A673 (cell line): ENCODE measurements at regions of chr19 and their contacts with region 1.

Region 1: DNA sequence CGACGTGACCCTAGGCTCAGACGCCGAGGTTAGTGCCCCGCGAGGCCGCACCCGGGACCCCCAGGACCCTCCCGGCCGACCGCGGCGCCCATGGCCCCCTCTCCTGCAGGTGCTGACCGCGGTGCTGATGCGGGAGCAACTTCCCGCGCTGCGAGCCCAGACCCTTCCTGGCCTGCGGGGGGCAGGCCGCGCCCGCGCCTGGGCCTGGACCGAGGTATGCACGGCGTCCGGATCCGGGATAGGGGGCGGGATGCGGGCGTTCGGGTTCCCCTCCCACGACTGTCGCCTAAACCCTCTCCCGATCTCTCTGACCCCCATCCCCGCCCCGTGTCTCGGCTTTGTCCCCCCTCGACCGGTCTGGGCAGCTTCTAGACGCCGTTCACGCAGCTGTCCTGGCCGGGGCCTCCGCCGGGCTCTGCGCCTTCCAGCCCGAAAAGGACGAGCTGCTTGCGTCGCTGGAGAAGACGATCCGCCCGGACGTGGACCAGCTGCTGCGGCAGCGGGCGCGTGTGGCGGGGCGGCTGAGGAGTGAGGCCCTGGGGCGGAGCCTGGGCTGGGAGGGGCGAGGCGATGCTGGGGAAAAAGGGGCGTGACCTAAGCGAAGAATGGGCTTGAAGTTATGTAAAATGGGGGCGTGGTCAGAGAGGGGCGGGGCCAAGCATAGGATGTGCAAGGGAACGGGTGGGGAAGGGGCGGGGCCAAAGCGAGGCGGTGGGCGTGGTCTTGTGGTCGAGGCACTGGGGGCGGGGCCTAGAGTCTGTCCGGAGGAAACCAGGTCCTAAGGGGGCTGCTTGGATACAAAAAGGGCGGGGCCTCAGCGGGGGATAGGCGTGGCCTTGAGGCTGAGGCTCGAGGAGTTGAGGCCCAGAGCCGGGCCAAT is 16.0 kb upstream of the COLGALT1 start:
- DNase-seq: peak; percentile 98
- H3K4me3 ChIP-seq: peak overlapping the region; percentile 53
- H3K27ac ChIP-seq: peak overlapping the region; percentile 56
- H3K4me1 ChIP-seq: no peaks in the 10 kb centered on the region
- H3K27me3 ChIP-seq: no peaks in the 10 kb centered on the region
- CTCF ChIP-seq: peak; percentile 39; the same call in 1 of the 2 replicates

Region 2: GRCh38 chr19:17226002-17226933 is 313.2 kb before region 1 on chr19 and contains the start of gene OCEL1:
- CTCF ChIA-PET with region 1: no interaction called
- POLR2A ChIA-PET with region 1: no interaction called
- intact Hi-C with region 1: no loop called
- DNase-seq: peak; percentile 98
- H3K4me3 ChIP-seq: peak within 1 kb of the TSS; percentile 59
- H3K27ac ChIP-seq: peak within 1 kb of the TSS; percentile 86
- H3K4me1 ChIP-seq: peaks cover 5% of the 10 kb centered on the region
- H3K27me3 ChIP-seq: no peaks in the 10 kb centered on the region
- CTCF ChIP-seq: no peak
- total RNA-seq, gene OCEL1: 8.2 and 14.8 TPM in 2 replicates

Region 3: GRCh38 chr19:17282488-17283255 is 256.8 kb before region 1 on chr19:
- CTCF ChIA-PET with region 1: no interaction called
- POLR2A ChIA-PET with region 1: no interaction called
- intact Hi-C with region 1: no loop called
- DNase-seq: peak; percentile 89
- H3K4me3 ChIP-seq: peak overlapping the region; percentile 55
- H3K27ac ChIP-seq: peak overlapping the region; percentile 29
- H3K4me1 ChIP-seq: peaks cover 4% of the 10 kb centered on the region
- H3K27me3 ChIP-seq: no peaks in the 10 kb centered on the region
- CTCF ChIP-seq: peak; percentile 93

Region 4: DNA sequence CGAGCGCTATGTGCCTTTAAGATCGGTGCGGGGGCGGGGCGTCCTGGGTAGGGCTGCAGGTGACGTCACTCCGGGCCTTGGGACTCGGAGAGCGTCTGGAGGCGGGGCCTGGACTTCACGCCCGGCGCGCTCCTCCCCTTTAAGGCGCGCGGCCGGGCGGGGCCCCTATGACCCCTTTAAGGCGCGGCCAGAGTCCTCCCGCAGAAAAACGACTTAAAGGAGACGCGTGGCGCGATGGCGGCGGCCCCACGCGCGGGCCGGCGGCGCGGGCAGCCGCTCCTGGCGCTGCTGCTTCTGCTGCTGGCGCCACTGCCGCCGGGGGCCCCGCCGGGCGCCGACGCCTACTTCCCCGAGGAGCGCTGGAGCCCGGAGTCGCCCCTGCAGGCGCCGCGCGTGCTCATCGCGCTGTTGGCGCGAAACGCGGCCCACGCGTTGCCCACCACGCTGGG is 16.0 kb after region 1 on chr19 and contains the start of gene COLGALT1:
- CTCF ChIA-PET with region 1: no interaction called
- POLR2A ChIA-PET with region 1: no interaction called
- intact Hi-C with region 1: no loop called
- DNase-seq: peak; percentile 99
- H3K4me3 ChIP-seq: peak within 1 kb of the TSS; percentile 69
- H3K27ac ChIP-seq: peak within 1 kb of the TSS; percentile 85
- H3K4me1 ChIP-seq: peaks cover 23% of the 10 kb centered on the region
- H3K27me3 ChIP-seq: no peaks in the 10 kb centered on the region
- CTCF ChIP-seq: no peak
- total RNA-seq, gene COLGALT1: 91.3 and 93.5 TPM in 2 replicates

Region 5: DNA sequence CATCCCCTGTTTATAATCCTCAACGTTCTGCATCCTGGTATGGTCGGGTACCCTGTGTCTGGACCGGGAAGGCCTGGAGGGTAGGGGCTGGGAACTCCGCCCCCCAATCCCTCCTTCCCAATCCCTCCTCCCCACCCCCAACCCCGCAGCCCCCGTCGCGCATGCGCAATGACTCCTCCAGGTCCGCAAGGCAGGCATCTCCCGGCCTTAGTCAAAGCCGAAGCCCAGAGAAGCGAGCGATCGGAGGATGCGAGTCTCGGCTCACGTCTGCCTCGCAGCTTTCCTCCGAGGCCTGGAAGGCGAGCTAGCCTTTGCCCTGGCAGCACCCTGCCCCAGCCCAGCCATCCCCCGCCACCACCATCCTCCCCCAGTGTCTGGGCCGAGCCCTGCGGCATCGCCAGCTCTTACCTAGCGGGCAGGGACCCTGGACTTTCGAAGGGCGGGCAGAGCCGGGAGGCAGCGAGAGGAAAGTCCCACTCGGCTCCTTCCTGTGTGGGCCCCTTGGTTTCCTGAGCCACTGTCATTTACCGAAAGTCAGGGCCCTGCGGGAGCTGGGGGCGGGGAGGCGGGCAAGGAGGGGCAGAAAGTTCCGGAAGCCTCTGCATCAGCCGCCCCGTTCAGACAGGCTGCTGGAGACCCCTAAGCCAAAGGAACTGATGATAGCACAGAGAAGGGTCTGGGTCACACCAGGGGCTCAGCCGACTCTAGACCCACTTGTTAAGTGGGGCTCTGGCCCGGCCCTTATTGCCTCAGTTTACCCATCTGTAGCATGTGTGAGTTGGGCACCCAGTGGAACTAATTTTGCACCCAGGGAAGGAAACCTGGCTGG is 308.3 kb after region 1 on chr19 and contains the start of gene JAK3:
- CTCF ChIA-PET with region 1: no interaction called
- POLR2A ChIA-PET with region 1: interaction called, 11 read pairs
- intact Hi-C with region 1: no loop called
- DNase-seq: peak; percentile 88
- H3K4me3 ChIP-seq: peak within 1 kb of the TSS; percentile 43
- H3K27ac ChIP-seq: peak within 1 kb of the TSS; percentile 59
- H3K4me1 ChIP-seq: peaks cover 9% of the 10 kb centered on the region
- H3K27me3 ChIP-seq: no peaks in the 10 kb centered on the region
- CTCF ChIP-seq: no peak
- total RNA-seq, gene JAK3: 2.4 and 2.5 TPM in 2 replicates